ENCODE measurements at regions of chr2 and their contacts with region 1.

Region 1: GRCh38 chr2:218852911-218853667 is 6.5 kb upstream of the WNT6 start:
- DNase-seq: peak; percentile 8
- H3K4me3 ChIP-seq: no peak overlapping the region
- H3K27ac ChIP-seq: no peak overlapping the region
- H3K27me3 ChIP-seq: peaks cover 51% of the 10 kb centered on the region
- CTCF ChIP-seq: peak; percentile 73

Region 2: GRCh38 chr2:218659258-218659987 is 193.7 kb before region 1 on chr2 and contains the starts of genes BCS1L and ZNF142:
- CTCF ChIA-PET with region 1: interaction called, 72 read pairs
- POLR2A ChIA-PET with region 1: interaction called, 5 read pairs
- DNase-seq: peak; percentile 48
- H3K4me3 ChIP-seq: peak within 1 kb of the TSS; percentile 91
- H3K27ac ChIP-seq: peak within 1 kb of the TSS; percentile 39
- H3K27me3 ChIP-seq: no peaks in the 10 kb centered on the region
- CTCF ChIP-seq: no peak
- polyA plus RNA-seq, gene BCS1L: 26.7 and 28.4 TPM in 2 replicates
- polyA plus RNA-seq, gene ZNF142: 3.5 and 5.5 TPM in 2 replicates

Region 3: DNA sequence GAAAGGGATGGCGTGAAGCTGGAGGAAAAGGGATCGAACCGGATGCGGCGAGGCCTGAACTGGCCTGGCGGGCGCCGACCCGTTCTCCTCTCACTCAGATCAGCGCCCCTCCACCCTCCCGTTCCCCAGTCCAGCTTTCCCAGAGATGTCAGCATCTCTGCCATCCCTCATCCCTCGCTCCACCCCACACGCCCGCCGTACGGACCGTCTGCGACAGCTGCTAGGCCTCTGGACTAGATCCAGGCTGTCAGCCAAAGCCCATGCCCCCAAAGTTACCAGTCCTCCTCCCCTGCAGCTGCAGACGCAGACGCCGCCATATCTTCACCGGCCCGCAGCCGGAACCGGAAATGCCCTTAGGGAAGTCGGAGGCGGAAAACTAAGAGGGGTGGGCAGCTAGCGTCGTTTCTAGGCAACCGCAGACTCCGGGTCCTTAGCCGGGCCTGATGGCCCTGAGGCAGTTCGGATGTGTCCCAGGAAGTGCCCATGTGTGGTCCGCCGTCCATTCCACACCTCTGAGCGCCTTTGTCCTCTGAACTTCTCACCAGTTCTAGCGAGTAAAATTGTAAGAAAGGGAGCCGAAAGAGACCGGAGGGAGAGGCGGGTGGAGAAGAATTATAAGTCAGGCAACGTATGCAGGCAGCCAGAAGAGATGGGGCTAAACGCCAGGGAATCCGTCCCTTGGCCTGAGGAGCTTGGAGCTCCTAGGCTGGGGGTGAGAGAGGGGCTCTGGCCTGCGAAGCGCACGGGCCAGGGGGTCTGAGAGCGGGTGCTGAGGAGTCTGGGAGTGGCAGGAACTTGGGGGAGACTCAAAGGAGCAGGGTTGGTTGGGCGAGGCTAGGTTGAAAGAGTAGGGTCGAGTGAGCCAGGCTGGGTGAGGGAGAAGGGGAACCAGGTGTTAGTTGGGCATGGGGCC is 181.2 kb before region 1 on chr2 and contains the starts of genes RNF25 and STK36:
- CTCF ChIA-PET with region 1: interaction called, 27 read pairs
- POLR2A ChIA-PET with region 1: no interaction called
- DNase-seq: peak; percentile 74
- H3K4me3 ChIP-seq: peak within 1 kb of the TSS; percentile 95
- H3K27ac ChIP-seq: peak within 1 kb of the TSS; percentile 77
- H3K27me3 ChIP-seq: no peaks in the 10 kb centered on the region
- CTCF ChIP-seq: no peak
- polyA plus RNA-seq, gene RNF25: 57.5 and 76.3 TPM in 2 replicates
- polyA plus RNA-seq, gene STK36: 52.5 and 53.1 TPM in 2 replicates

Region 4: GRCh38 chr2:218691234-218691633 is 161.9 kb before region 1 on chr2:
- CTCF ChIA-PET with region 1: interaction called, 94 read pairs
- POLR2A ChIA-PET with region 1: no interaction called
- DNase-seq: peak; percentile 10
- H3K4me3 ChIP-seq: no peak overlapping the region
- H3K27ac ChIP-seq: no peak overlapping the region
- H3K27me3 ChIP-seq: no peaks in the 10 kb centered on the region
- CTCF ChIP-seq: no peak

Region 5: DNA sequence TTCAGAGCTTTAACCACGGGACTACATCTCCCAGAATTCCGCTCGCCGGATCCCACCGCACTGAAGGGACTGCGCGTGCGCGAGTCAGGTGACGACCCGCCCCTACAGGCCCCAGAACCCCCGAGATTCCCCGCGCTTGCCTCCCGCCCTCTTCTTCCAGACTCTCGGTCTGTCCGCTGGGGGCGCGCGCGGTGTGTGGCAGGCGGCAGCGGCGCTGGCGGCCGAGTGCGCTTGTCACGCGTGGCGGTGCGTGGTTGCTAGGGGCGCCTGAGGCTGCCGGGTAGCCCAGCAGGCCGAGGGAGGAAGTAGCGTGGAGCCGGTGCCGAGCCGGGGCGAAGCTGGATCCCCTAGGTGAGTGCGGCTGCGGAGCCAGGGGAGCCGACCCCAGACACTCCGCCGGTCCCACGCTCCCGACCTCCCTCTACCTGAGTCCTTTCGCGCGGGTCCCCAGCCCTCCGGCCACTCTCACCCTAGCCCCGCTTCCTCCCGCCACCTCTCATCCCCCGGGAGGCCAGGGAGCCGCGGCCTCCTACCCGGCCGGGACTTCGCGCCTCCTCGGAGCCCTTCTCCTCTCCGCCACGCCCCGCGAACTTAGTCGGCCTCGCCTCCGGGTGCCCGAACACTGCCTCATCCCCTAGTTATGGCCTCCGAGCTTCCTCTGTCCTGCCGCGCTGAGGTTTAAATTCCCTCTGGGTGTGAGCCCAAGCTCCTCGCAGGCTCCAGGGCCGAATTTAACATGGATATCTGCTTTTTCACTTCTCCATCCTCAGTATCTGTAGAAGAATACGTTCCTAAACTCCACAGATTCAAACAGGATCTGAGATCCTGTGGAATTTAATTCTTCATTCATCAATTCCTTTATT is 142.2 kb before region 1 on chr2 and contains the start of gene TTLL4:
- CTCF ChIA-PET with region 1: interaction called, 44 read pairs
- POLR2A ChIA-PET with region 1: no interaction called
- DNase-seq: peak; percentile 88
- H3K4me3 ChIP-seq: peak within 1 kb of the TSS; percentile 91
- H3K27ac ChIP-seq: peak within 1 kb of the TSS; percentile 87
- H3K27me3 ChIP-seq: no peaks in the 10 kb centered on the region
- CTCF ChIP-seq: peak; percentile 74
- polyA plus RNA-seq, gene TTLL4: 16.3 and 18.0 TPM in 2 replicates

Region 6: DNA sequence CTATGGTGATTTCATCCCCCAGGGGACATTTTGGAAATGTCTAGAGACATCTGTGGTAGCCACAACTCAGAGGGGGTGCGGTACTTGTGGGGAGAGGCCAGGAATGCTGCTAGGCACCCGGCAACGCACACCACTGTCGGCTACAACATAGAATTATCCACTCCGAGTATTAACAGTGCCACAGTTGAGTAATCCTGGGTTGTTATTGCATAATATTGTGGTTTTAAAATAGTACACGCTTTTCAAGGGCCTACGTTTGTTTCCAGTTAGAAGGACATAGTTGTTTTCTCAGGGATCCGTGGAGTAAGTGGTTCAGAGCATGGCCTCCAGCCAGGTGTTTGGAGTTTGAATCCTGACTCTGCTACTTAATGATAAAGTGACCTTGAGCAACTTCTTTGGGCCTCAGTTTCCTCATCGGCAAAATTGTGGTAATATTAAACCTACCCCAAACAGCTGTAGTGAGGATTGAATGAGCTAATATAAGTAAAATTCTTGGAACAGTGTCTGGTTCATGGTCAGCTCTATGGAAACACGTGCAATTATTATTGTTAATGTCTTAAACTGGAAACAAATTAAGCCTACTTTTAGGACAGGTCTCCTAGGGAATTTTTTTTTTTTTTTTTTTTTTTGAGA is 46.6 kb before region 1 on chr2:
- CTCF ChIA-PET with region 1: interaction called, 15 read pairs
- POLR2A ChIA-PET with region 1: no interaction called
- DNase-seq: peak; percentile 84
- H3K4me3 ChIP-seq: no peak overlapping the region
- H3K27ac ChIP-seq: peak overlapping the region; percentile 34
- H3K27me3 ChIP-seq: no peaks in the 10 kb centered on the region
- CTCF ChIP-seq: no peak

Region 7: DNA sequence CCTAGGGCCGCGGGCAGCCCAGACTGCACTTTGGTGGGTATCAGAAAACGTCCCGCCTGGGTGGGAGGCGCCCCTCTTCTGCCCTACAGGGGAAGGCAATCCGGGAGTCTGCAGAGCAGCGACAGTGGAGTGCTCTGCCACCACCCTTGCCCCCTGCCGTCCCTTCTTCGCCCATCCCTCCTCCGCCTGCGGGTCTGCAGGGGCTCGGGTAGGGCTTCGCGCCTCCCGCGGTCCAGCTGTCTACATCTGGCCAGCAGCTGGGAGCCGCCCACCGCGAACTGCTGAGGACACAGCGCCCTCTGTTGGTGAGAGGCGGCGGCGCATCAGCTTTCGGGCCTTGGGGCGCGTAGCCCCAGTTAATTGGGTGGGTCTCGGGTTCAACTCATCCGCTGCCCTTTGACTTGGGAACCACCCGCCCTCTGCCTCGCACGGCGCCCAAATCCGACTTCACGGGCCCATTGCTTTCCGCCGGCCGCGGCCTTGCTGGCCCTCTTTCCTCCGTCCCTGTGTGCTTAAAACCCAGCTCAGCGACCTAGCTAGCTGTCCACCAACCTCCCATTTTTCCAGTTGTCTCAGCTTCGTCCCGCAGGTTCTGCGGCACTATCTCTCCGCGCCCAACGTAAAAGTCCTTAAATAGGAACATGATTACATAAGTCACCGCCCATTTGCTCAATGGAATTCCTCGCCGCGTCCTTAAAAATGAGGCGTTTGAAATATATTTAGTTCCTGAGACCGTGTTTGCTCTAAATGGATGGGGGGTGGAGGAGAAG is 45.2 kb after region 1 on chr2:
- CTCF ChIA-PET with region 1: interaction called, 21 read pairs
- POLR2A ChIA-PET with region 1: no interaction called
- DNase-seq: no peak
- H3K4me3 ChIP-seq: no peak overlapping the region
- H3K27ac ChIP-seq: no peak overlapping the region
- H3K27me3 ChIP-seq: peaks cover 81% of the 10 kb centered on the region
- CTCF ChIP-seq: peak; percentile 85